ENCODE measurements at regions of chr3 and their contacts with region 1.

Region 1: GRCh38 chr3:188052169-188053030 is 101.6 kb upstream of the LPP start:
- DNase-seq: peak; percentile 94
- H3K4me3 ChIP-seq: peak overlapping the region; percentile 20 to 32 (median 26)
- H3K27ac ChIP-seq: peak overlapping the region; percentile 89 to 96 (median 92)
- H3K4me1 ChIP-seq: peaks cover 15 to 60% (median 57%) of the 10 kb centered on the region in 4 donors
- H3K27me3 ChIP-seq: no peaks in the 10 kb centered on the region
- CTCF ChIP-seq: peak; percentile 71 to 94 (median 79)
- EP300 ChIP-seq: peak; percentile 70
- POLR2A ChIP-seq: no peak

Region 2: DNA sequence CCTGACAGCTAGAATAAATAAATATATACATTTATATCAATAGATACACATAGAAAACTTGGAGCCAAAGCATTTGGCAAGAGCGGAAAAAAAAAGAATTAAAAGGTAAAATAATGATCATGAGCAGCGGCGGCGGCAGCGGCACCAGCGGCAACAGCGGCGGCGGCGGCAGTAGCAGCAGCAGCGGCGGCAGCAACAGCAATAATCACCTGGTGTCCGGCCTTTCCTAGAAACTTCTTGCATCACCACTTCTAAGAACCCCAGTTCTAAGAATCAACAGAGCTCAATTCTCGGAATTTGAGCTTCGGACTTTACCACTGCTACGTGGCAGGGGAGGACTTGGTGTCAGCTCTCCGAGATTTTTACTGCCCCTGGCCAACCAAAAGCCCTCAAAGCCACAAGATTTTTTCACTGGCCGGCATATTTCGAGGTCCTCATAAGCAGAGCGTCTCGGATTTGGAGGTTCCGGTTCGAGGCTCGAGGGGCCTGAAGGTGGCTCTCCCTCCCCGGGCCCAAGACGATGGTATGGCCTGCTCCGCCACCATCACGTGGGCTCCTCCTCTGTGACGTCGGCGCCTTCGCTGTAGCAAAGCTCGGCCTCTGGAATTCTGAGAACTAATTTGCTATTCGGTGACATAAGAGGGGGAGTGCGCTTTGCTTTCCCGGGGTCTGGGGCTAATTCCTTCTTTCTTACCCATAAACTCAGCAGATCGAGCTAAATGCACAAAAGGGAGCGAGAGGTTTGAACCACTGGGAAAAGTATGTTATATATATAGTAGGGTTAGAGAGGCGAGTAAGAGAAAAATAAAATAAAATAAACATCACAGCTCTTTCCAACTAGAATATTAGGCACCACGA is 307.0 kb before region 1 on chr3 and contains the start of gene BCL6:
- intact Hi-C with region 1: loop called (anchors 5 kb)
- DNase-seq: peak; percentile 99
- H3K4me3 ChIP-seq: peak within 1 kb of the TSS; percentile 69 to 81 (median 76)
- H3K27ac ChIP-seq: peak within 1 kb of the TSS; percentile 94 to 99 (median 98)
- H3K4me1 ChIP-seq: peaks cover 13 to 69% (median 48%) of the 10 kb centered on the region in 4 donors
- H3K27me3 ChIP-seq: no peaks in the 10 kb centered on the region
- CTCF ChIP-seq: no peak
- EP300 ChIP-seq: peak; percentile 96
- POLR2A ChIP-seq: peak; percentile 98
- total RNA-seq, gene BCL6: 86.0 to 161 (median 111) TPM

Region 3: DNA sequence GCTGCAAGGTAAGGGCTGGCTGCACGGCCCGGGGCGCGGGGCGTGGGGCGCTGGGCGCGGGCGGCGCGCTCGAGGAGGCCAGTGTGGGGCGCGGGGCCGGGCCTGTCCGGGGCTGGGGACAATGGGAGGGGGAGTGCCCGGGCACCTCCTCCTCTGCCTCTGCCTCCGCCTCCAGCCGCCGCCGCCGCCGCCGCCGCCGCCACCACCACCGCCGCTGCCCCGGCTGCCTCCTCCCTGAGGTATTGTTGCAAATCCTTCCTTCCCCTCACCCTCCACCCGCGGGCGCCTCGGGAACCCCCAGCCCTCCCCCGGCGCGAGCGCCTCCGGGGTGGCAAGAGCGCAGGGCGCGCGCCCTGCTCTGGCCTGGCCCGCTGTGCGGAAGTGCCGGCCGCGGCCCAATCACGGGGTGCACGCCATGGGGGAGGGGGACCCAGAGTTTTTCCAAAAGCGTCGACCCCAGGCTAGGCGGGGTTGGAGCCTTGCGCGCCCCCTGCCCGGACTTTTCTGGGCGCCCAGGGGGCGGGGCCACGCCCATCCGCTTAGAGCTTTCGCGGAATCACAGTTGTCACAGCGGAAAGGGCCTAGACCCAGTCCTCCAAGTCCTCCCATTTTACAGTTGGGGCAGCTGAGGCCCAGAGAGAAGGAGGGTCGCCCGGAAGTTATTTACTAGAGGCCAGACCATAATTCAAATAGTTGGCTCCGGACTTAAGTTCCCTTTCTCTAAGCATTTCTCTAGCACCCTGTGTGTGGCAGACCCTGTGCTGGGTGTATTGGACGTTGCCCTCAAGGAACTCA is 101.8 kb after region 1 on chr3 and contains the start of gene LPP:
- intact Hi-C with region 1: loop called (anchors 5 kb)
- DNase-seq: peak; percentile 93
- H3K4me3 ChIP-seq: peak within 1 kb of the TSS; percentile 84 to 92 (median 90)
- H3K27ac ChIP-seq: peak within 1 kb of the TSS; percentile 98 to 99 (median 99)
- H3K4me1 ChIP-seq: peaks cover 22 to 68% (median 57%) of the 10 kb centered on the region in 4 donors
- H3K27me3 ChIP-seq: no peaks in the 10 kb centered on the region
- CTCF ChIP-seq: peak in 1 of 3 experiments; percentile 10
- EP300 ChIP-seq: no peak
- POLR2A ChIP-seq: peak; percentile 39
- total RNA-seq, gene LPP: 1,872 to 3,079 (median 2,300) TPM

Region 4: DNA sequence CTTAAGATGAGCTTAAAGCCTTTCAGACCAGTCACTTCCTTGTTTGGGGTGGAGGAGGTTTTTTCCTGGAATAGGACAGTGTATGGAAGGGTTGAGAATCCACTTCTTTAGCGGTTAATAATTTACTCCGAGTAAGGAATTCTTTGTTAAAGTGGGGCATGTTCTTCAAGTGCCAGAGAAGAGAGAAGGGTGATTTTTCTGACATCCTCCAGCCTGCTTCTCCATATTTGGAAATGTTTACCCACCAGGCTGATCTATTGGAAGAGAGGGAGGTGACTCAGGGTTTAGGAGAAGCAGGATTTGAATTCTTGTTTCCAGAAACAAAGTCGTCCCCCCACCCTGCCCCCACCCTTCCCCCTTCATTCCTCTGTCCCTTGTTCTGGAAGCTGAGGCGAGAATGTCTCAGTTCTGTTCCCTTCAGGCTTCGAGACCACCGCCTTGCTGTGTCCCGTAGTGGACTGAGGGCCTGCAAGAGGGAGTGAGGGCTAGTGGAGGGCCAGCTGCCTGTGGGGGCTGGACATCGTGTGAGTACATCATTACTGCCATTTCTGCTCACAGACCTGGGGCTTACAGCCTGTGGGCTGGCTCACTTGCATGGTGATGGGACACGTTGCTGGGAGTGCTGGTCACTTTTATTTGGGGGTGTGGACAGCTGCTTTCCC is 160.0 kb after region 1 on chr3:
- intact Hi-C with region 1: loop called (anchors 10 kb)
- DNase-seq: peak; percentile 95
- H3K4me3 ChIP-seq: peak overlapping the region; percentile 50 to 67 (median 56)
- H3K27ac ChIP-seq: peak overlapping the region; percentile 90 to 98 (median 94)
- H3K4me1 ChIP-seq: peaks cover 39 to 67% (median 54%) of the 10 kb centered on the region in 4 donors
- H3K27me3 ChIP-seq: no peaks in the 10 kb centered on the region
- CTCF ChIP-seq: no peak
- EP300 ChIP-seq: peak; percentile 71
- POLR2A ChIP-seq: peak; percentile 23

Region 5: GRCh38 chr3:188257384-188258026 is 205.1 kb after region 1 on chr3:
- intact Hi-C with region 1: loop called (anchors 10 kb)
- DNase-seq: no peak
- H3K4me3 ChIP-seq: no peak overlapping the region
- H3K27ac ChIP-seq: peak overlapping the region; percentile 90 to 98 (median 93)
- H3K4me1 ChIP-seq: peaks cover 53 to 100% (median 99%) of the 10 kb centered on the region in 4 donors
- H3K27me3 ChIP-seq: no peaks in the 10 kb centered on the region
- CTCF ChIP-seq: no peak
- EP300 ChIP-seq: no peak
- POLR2A ChIP-seq: no peak

Region 6: DNA sequence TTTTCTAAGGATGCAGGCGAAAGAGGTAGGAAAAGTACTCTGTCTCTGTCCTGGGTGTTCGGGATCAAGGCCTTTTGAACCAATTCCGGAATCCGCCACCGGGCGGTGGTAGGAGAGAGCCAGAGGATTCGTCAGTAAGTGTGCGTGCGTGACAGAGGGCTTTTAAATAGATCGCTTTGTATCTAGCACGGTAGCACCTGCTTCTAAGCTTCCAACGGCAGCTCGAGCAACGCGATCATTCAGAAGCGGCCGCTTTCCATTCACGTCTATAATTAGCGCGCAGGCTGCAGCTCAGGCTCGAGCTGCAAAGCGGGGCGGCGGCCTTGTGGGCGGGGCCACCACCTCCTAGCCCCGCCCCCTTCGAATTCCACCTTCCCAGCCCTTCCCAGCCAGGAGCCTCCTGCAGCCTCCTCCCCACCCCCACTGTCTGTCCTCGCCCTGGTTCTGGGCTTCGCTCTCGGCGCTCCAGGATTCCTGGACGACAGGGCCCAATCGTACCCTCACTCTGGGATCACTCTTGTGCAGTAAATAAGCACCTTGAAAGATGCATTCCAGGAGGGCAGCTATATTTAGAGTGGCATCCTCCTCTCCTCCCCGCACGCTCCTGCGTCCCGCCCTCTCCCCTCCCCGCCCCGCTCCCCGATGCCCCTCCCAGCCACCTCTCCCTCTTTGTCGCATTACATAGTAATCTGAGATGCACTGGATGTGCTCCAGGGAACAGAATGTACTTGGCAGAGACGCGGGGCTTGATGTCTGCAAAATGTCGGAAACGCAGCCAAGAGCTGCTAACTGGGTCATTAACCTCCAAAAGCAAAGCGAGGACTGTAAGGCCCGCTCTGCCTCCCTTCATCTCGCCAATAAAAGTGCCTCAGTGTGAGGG is 895.2 kb after region 1 on chr3:
- intact Hi-C with region 1: loop called (anchors 5 kb)
- DNase-seq: peak; percentile 99
- H3K4me3 ChIP-seq: peak overlapping the region; percentile 46 to 52 (median 48)
- H3K27ac ChIP-seq: peak overlapping the region; percentile 95 to 99 (median 96)
- H3K4me1 ChIP-seq: peaks cover 55 to 81% (median 69%) of the 10 kb centered on the region in 4 donors
- H3K27me3 ChIP-seq: no peaks in the 10 kb centered on the region
- CTCF ChIP-seq: peak; percentile 30 to 52 (median 42)
- EP300 ChIP-seq: peak; percentile 100
- POLR2A ChIP-seq: no peak

Measured in esophagus muscularis mucosa (tissue), 4 donors.